ENCODE measurements at regions of chr6 and their contacts with region 1.

Region 1: DNA sequence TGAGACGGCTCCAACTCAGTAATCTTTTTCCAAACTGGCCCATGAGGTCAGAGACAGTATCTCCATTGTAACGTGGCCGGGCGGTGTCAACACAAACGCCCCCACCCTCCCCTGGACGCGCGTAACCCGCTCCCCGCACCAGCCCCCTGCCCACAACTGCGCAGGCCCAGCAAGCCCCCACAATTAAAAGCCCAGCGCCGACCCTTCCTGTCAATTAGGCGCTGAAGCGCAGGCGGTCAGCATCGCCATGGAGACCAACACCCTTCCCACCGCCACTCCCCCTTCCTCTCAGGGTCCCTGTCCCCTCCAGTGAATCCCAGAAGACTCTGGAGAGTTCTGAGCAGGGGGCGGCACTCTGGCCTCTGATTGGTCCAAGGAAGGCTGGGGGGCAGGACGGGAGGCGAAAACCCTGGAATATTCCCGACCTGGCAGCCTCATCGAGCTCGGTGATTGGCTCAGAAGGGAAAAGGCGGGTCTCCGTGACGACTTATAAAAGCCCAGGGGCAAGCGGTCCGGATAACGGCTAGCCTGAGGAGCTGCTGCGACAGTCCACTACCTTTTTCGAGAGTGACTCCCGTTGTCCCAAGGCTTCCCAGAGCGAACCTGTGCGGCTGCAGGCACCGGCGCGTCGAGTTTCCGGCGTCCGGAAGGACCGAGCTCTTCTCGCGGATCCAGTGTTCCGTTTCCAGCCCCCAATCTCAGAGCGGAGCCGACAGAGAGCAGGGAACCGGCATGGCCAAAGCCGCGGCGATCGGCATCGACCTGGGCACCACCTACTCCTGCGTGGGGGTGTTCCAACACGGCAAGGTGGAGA is at the starts of genes HSPA1A and HSPA1L:
- DNase-seq: peak; percentile 93 to 97
- ATAC-seq: peak; percentile 78 to 89
- H3K4me3 ChIP-seq: peak within 1 kb of the TSS; percentile 59
- H3K27ac ChIP-seq: peak within 1 kb of the TSS; percentile 96 to 97
- H3K4me1 ChIP-seq: peaks cover 30% of the 10 kb centered on the region
- CTCF ChIP-seq: no peak
- EP300 ChIP-seq: no peak
- POLR2A ChIP-seq: peak; percentile 100
- RAD21 ChIP-seq: no peak
- polyA plus RNA-seq, gene HSPA1A: 88.2 and 122 TPM in 2 replicates
- polyA plus RNA-seq, gene HSPA1L: 1.2 and 1.6 TPM in 2 replicates

Region 2: GRCh38 chr6:31851485-31851832 is 36.2 kb after region 1 on chr6:
- CTCF ChIA-PET with region 1: no interaction called
- POLR2A ChIA-PET with region 1: no interaction called
- DNase-seq: no peak
- ATAC-seq: peak; percentile 54 to 66; a peak in 4 of 6 replicates
- H3K4me3 ChIP-seq: no peak overlapping the region
- H3K27ac ChIP-seq: 0 out of 6 replicates have a peak overlapping the region, but pooled peaks of 1 of the 2 experiments have one; percentile 55
- H3K4me1 ChIP-seq: peaks cover 11% of the 10 kb centered on the region; the same call in 1 of the 3 replicates
- CTCF ChIP-seq: no peak
- EP300 ChIP-seq: no peak
- POLR2A ChIP-seq: no peak
- RAD21 ChIP-seq: no peak

Region 3: GRCh38 chr6:31862344-31863227 is 47.4 kb after region 1 on chr6 and contains the start of gene NEU1:
- CTCF ChIA-PET with region 1: no interaction called
- POLR2A ChIA-PET with region 1: interaction called, 13 read pairs
- DNase-seq: peak; percentile 99 to 100
- ATAC-seq: peak; percentile 97 to 98
- H3K4me3 ChIP-seq: peak within 1 kb of the TSS; percentile 74
- H3K27ac ChIP-seq: peak within 1 kb of the TSS; percentile 69 to 81
- H3K4me1 ChIP-seq: peaks cover 4% of the 10 kb centered on the region; the same call in 1 of the 3 replicates
- CTCF ChIP-seq: no peak
- EP300 ChIP-seq: no peak
- POLR2A ChIP-seq: peak; percentile 85
- RAD21 ChIP-seq: no peak
- polyA plus RNA-seq, gene NEU1: 15.8 and 20.6 TPM in 2 replicates